Activated B cell treated with CpG ODN at 0.5 μM for 24 hours (primary cell): ENCODE measurements at regions of chr15 and their contacts with region 1.

Region 1: GRCh38 chr15:42273102-42273899 is at the starts of genes GANC and TMEM87A:
- DNase-seq: peak; percentile 85
- ATAC-seq: peak; percentile 89
- H3K4me3 Mint-ChIP-seq: peak within 1 kb of the TSS; percentile 100
- H3K27ac Mint-ChIP-seq: peak within 1 kb of the TSS; percentile 100
- H3K4me1 Mint-ChIP-seq: peaks cover 50% of the 10 kb centered on the region
- H3K27me3 Mint-ChIP-seq: no peaks in the 10 kb centered on the region
- CTCF ChIP-seq: no peak
- total RNA-seq, gene GANC: 59.9 and 72.2 TPM in 2 replicates
- total RNA-seq, gene TMEM87A: 45.4 and 52.6 TPM in 2 replicates

Region 2: DNA sequence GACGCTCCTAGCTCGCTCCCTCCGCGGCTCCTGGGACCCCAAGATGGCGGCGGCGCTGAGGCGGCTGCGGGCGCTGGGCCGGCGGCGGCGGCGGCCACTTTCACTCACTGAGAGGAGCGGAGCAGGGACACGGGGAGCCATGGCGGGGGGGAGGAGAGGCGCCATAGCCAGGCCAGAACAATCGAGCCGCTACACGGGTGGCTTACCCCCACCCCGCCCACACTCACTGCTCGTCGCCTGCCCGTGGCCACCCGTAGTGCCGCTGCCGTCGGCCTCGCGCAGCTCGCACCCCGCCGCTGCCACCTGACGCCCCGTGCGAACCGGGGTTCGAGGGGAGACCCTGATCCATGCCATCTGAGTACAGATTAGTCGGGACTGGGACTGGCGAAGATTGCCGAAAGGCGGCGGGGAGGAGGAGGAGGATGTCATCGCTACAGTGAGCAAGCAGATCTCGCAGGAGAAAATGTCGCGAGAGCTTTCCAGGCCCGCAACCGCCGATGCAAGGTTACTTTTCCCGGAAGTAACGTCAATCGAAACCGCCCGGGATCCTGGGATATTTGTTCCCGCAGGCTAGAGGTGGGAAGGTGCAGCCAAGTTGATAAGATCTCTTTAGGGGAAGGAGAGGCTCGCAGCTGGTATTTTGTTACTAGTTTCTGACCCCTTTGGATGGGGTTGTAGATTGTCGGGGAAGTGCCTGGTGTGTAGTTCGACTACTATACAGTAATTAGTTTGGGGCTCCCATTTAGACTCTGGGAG is 1157.0 kb before region 1 on chr15 and contains the start of gene INO80:
- CTCF ChIA-PET with region 1: no interaction called
- POLR2A ChIA-PET with region 1: no interaction called
- intact Hi-C with region 1: loop called (anchors 1 kb)
- DNase-seq: peak; percentile 93
- ATAC-seq: peak; percentile 70
- H3K4me3 Mint-ChIP-seq: peak within 1 kb of the TSS; percentile 97
- H3K27ac Mint-ChIP-seq: peak within 1 kb of the TSS; percentile 100
- H3K4me1 Mint-ChIP-seq: peaks cover 32% of the 10 kb centered on the region
- H3K27me3 Mint-ChIP-seq: no peaks in the 10 kb centered on the region
- CTCF ChIP-seq: no peak
- total RNA-seq, gene INO80: 34.8 and 38.8 TPM in 2 replicates

Region 3: DNA sequence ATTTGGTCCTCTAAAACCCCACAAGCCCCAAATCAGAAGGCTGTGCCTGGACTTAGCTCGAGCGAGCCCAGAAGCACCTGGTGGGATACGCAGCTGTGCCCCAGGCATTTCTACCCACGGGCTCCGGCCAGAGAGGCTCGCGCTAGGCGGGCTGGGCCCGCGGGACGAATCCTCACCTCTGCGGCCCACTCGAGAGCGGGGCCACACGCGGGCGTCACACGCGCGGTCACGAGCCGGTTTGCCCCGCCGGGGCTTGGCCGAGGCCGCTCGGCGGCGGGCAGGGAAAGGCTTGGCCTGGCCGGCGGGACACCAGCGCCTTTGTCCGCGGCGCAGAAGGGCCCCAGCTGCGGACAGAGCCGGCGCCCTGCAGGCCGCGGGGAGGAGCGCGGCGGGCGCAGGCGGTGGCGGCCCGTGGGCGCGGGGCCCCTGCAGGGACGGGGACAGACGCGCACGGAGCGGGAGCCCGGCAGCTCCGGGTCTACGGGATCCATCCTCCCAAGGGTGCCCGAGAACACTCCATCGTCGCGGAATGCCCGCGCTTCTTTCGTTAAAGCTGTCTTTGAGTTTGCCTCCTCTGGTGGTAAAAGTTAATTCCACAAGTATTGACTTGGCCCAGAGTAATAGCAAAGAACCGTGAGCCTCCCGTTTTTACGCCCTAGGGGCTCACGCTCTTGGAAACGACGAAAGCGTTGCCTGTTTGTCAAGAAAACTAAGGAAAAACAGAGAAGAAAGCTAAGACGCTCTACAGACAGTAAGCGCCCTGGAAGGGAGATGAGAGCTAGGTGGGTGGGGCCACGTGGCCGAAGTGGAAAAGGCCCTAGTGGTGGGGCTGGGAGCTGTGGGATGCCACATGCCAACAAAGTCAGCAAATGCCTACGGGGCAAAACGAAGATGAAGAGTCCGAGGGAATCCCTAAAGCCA is 687.9 kb before region 1 on chr15:
- CTCF ChIA-PET with region 1: no interaction called
- POLR2A ChIA-PET with region 1: no interaction called
- intact Hi-C with region 1: no loop called
- DNase-seq: peak; percentile 29
- ATAC-seq: peak; percentile 61
- H3K4me3 Mint-ChIP-seq: peak overlapping the region; percentile 78
- H3K27ac Mint-ChIP-seq: no peak overlapping the region
- H3K4me1 Mint-ChIP-seq: peaks cover 7% of the 10 kb centered on the region
- H3K27me3 Mint-ChIP-seq: peaks cover 53% of the 10 kb centered on the region
- CTCF ChIP-seq: no peak

Region 4: GRCh38 chr15:41972253-41973242 is 300.8 kb before region 1 on chr15 and contains the start of gene EHD4:
- CTCF ChIA-PET with region 1: no interaction called
- POLR2A ChIA-PET with region 1: interaction called, 3 read pairs
- intact Hi-C with region 1: loop called (anchors 5 kb)
- DNase-seq: peak; percentile 88
- ATAC-seq: peak; percentile 84
- H3K4me3 Mint-ChIP-seq: peak within 1 kb of the TSS; percentile 93
- H3K27ac Mint-ChIP-seq: peak within 1 kb of the TSS; percentile 90
- H3K4me1 Mint-ChIP-seq: peaks cover 46% of the 10 kb centered on the region
- H3K27me3 Mint-ChIP-seq: peaks cover 7% of the 10 kb centered on the region
- CTCF ChIP-seq: no peak
- total RNA-seq, gene EHD4: 38.4 and 42.6 TPM in 2 replicates

Region 5: DNA sequence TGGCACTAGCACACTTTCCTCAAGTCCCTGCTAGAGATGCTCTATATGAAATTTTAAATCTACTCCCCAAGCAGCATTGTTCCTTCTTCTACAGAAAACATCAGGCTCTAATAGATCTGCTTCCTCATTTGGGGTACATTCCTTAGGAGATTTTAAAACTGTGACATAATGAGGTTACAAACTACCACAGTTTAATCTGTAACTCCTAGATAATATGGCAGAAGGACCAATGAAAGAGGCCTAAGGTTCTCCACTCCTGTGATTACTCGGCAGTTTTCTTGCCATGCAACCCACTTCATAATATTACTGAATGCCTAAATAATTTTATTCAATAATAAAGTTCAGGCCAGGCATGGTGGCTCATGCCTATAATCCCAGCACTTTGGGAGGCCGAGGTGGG is 201.5 kb after region 1 on chr15:
- CTCF ChIA-PET with region 1: no interaction called
- POLR2A ChIA-PET with region 1: interaction called, 5 read pairs
- intact Hi-C with region 1: loop called (anchors 1 kb)
- DNase-seq: no peak
- ATAC-seq: no peak
- H3K4me3 Mint-ChIP-seq: no peak overlapping the region
- H3K27ac Mint-ChIP-seq: peak overlapping the region; percentile 59
- H3K4me1 Mint-ChIP-seq: peaks cover 25% of the 10 kb centered on the region
- H3K27me3 Mint-ChIP-seq: no peaks in the 10 kb centered on the region
- CTCF ChIP-seq: no peak

Region 6: GRCh38 chr15:42736793-42737528 is 463.7 kb after region 1 on chr15 and contains the start of gene CDAN1:
- CTCF ChIA-PET with region 1: no interaction called
- POLR2A ChIA-PET with region 1: no interaction called
- intact Hi-C with region 1: loop called (anchors 10 kb)
- DNase-seq: peak; percentile 92
- ATAC-seq: peak; percentile 96
- H3K4me3 Mint-ChIP-seq: peak within 1 kb of the TSS; percentile 83
- H3K27ac Mint-ChIP-seq: peak within 1 kb of the TSS; percentile 61
- H3K4me1 Mint-ChIP-seq: peaks cover 13% of the 10 kb centered on the region
- H3K27me3 Mint-ChIP-seq: no peaks in the 10 kb centered on the region
- CTCF ChIP-seq: no peak
- total RNA-seq, gene CDAN1: 14.6 and 15.6 TPM in 2 replicates

Region 7: DNA sequence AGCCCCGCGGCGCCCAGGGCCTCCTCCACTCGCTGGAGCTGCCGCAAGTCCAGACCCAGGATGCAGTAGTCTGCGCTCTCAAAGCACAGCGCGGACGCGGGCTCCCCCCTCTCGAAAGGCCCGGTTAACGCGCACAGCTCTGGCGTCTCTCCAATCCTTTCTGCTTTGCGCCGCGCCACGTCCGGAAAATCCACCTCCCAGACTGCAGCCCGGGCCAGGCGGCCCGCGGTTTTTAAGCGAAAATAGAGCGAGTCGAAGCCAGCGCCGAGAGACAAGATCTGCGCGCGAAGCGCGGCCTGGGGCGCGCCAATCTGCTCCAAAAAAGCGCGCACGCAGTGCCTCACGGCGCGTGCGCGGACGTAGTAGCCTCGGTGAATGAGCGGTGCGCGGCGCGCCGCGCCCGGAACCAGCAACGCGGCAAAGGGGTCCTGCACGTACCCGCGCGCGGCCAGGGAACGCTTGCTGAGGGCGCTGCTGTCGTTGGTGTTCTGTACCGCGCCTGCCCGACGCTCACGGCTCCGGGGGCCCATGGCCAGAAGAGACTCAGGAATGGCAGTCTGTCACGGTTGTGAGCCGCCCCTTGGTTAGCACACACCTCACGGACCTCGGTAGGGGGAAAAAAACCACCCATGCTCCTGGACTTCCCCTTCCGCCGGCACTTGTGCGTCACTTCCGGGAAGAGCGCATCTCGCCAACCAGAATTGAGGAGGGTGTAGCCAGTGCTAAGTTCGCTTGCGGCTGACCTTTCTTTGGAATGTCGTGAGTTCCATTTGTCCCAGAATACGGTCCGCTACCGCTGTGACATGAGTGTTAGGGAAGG is 1056.9 kb after region 1 on chr15 and contains the start of gene LCMT2:
- CTCF ChIA-PET with region 1: no interaction called
- POLR2A ChIA-PET with region 1: interaction called, 4 read pairs
- intact Hi-C with region 1: loop called (anchors 5 kb)
- DNase-seq: peak; percentile 85
- ATAC-seq: peak; percentile 85
- H3K4me3 Mint-ChIP-seq: peak within 1 kb of the TSS; percentile 97
- H3K27ac Mint-ChIP-seq: peak within 1 kb of the TSS; percentile 99
- H3K4me1 Mint-ChIP-seq: peaks cover 32% of the 10 kb centered on the region
- H3K27me3 Mint-ChIP-seq: no peaks in the 10 kb centered on the region
- CTCF ChIP-seq: no peak
- total RNA-seq, gene LCMT2: 15.5 and 17.1 TPM in 2 replicates